ENCODE measurements at regions of chr2 and their contacts with region 1.

Region 1: DNA sequence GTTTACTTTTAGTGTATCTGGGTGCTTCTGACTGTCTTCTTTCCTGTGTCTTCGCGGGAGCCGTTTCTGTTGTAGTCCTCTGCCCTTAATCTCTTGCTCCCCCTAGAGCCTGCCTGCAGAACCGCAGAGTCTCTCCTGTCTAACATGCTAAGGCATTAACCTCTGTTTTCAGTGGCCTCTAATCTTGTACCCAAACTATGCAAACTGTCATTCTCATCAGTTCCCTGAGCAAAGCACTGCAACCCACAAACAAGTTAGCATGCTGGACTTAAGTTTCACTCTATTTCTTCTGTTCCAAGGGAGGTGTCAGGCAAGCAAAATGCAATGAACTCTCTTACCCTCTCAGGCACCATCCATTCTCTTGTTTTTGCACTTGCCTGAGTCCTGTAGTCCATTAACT is 138.4 kb downstream of the OTX1 start:
- DNase-seq: peak; percentile 64 to 73
- H3K4me3 ChIP-seq: no peak overlapping the region
- H3K4me3 Mint-ChIP-seq: peak overlapping the region; percentile 25
- H3K27ac Mint-ChIP-seq: no peak overlapping the region
- H3K4me1 ChIP-seq: peaks cover 26% of the 10 kb centered on the region
- H3K4me1 Mint-ChIP-seq: peaks cover 21% of the 10 kb centered on the region
- H3K27me3 ChIP-seq: no peaks in the 10 kb centered on the region
- H3K27me3 Mint-ChIP-seq: no peaks in the 10 kb centered on the region
- CTCF ChIP-seq: peak; percentile 74 to 80

Region 2: GRCh38 chr2:62456721-62457539 is 732.1 kb before region 1 on chr2:
- CTCF ChIA-PET with region 1: no interaction called
- POLR2A ChIA-PET with region 1: no interaction called
- intact Hi-C with region 1: loop called (anchors 2 kb)
- DNase-seq: peak; percentile 82 to 95
- H3K4me3 ChIP-seq: peak overlapping the region; percentile 68
- H3K4me3 Mint-ChIP-seq: peak overlapping the region; percentile 75
- H3K27ac Mint-ChIP-seq: peak overlapping the region; percentile 66
- H3K4me1 ChIP-seq: peaks cover 38% of the 10 kb centered on the region
- H3K4me1 Mint-ChIP-seq: peaks cover 8% of the 10 kb centered on the region
- H3K27me3 ChIP-seq: no peaks in the 10 kb centered on the region
- H3K27me3 Mint-ChIP-seq: no peaks in the 10 kb centered on the region
- CTCF ChIP-seq: peak; percentile 92 to 98

Region 3: GRCh38 chr2:62787386-62787785 is 401.6 kb before region 1 on chr2:
- CTCF ChIA-PET with region 1: no interaction called
- POLR2A ChIA-PET with region 1: no interaction called
- intact Hi-C with region 1: loop called (anchors 1 kb)
- DNase-seq: peak in 1 of 2 experiments; percentile 27
- H3K4me3 ChIP-seq: no peak overlapping the region
- H3K4me3 Mint-ChIP-seq: no peak overlapping the region
- H3K27ac Mint-ChIP-seq: no peak overlapping the region
- H3K4me1 ChIP-seq: no peaks in the 10 kb centered on the region; the same call in 1 of the 2 replicates
- H3K4me1 Mint-ChIP-seq: peaks cover 20% of the 10 kb centered on the region
- H3K27me3 ChIP-seq: no peaks in the 10 kb centered on the region
- H3K27me3 Mint-ChIP-seq: no peaks in the 10 kb centered on the region
- CTCF ChIP-seq: peak in 1 of 2 experiments; percentile 14

Region 4: DNA sequence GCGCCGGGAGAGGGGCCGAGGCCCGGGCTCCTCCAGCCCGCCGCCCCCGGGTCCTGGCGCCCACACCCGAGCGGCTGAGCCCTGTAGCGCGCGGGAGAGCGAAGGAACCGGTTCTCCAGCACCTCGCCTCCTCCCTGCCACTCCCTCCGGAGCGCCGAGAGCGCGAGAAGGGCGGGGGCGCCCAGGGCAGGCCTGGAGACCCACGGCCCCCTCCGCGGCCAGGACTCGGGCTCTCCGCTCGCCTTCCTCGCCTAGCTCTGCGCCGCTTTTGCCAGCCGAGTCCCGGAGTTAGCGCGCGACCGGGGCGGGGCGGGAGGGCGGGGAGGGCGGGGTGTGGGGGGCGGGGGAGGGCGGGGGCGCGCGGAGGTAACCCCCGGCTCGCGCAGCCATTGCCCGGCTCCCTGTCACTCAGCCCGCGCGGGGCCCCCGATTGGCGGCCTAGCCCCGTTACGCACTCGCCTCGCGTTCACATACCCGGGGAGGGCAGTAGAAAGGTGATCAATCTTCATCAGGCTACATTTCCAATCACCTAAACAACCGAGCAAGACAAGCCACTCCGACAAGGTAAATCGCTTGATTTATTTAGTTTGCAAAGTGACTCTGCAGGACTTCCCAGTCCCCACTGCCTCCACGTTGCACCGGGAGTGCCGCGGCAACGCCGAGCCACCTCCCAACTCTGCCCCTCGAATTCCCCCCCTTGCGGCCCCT is 138.5 kb before region 1 on chr2 and contains the start of gene OTX1:
- CTCF ChIA-PET with region 1: no interaction called
- POLR2A ChIA-PET with region 1: no interaction called
- intact Hi-C with region 1: loop called (anchors 2 kb)
- DNase-seq: peak; percentile 95
- H3K4me3 ChIP-seq: peak within 1 kb of the TSS; percentile 52
- H3K4me3 Mint-ChIP-seq: peak within 1 kb of the TSS; percentile 85
- H3K27ac Mint-ChIP-seq: peak within 1 kb of the TSS; percentile 89
- H3K4me1 ChIP-seq: no peaks in the 10 kb centered on the region
- H3K4me1 Mint-ChIP-seq: no peaks in the 10 kb centered on the region
- H3K27me3 ChIP-seq: no peaks in the 10 kb centered on the region
- H3K27me3 Mint-ChIP-seq: no peaks in the 10 kb centered on the region
- CTCF ChIP-seq: peak in 1 of 2 experiments; percentile 18
- total RNA-seq, gene OTX1: 14.4 and 16.0 TPM in 2 replicates

Region 5: DNA sequence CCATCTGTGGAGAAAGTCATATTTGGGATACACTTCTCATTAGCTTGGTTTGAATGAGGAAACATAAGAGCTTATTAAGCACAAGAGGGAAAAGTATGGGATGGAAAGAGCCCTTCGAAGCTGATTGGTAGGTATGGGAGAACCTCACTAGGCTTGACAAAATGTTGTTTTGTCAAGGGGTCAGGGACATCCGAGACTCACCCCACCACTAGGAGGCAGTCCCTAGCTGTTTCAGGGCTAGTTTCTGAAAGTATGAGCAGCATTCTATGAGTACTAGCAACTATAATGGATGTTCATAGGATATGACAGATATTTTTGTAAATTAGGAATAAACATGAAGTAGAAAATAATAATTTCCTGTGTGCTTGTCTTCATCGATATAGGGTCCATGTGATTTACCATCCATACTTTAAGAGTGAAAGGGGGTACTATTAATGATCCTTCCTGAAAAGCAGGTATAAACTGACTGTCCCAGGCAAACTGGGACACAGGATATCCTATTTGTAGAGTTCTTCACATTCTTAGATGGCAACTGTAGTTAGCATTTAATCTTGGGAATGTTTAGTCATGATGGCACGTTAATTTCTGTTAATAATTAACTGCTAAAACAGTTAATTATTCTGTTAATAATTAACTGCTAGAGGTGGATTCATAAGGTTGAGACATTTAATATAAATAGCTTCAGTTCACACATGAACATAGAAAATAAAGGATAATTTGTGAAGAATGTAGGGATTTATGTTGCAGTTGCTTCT is 110.0 kb before region 1 on chr2:
- CTCF ChIA-PET with region 1: no interaction called
- POLR2A ChIA-PET with region 1: no interaction called
- intact Hi-C with region 1: loop called (anchors 1 kb)
- DNase-seq: peak; percentile 47 to 63
- H3K4me3 ChIP-seq: no peak overlapping the region
- H3K4me3 Mint-ChIP-seq: no peak overlapping the region
- H3K27ac Mint-ChIP-seq: no peak overlapping the region
- H3K4me1 ChIP-seq: peaks cover 26% of the 10 kb centered on the region
- H3K4me1 Mint-ChIP-seq: peaks cover 12% of the 10 kb centered on the region
- H3K27me3 ChIP-seq: no peaks in the 10 kb centered on the region
- H3K27me3 Mint-ChIP-seq: no peaks in the 10 kb centered on the region
- CTCF ChIP-seq: peak; percentile 47

Region 6: GRCh38 chr2:63166917-63167316 is 22.1 kb before region 1 on chr2:
- CTCF ChIA-PET with region 1: no interaction called
- POLR2A ChIA-PET with region 1: no interaction called
- intact Hi-C with region 1: no loop called
- DNase-seq: no peak
- H3K4me3 ChIP-seq: no peak overlapping the region
- H3K4me3 Mint-ChIP-seq: no peak overlapping the region
- H3K27ac Mint-ChIP-seq: no peak overlapping the region
- H3K4me1 ChIP-seq: no peaks in the 10 kb centered on the region
- H3K4me1 Mint-ChIP-seq: no peaks in the 10 kb centered on the region
- H3K27me3 ChIP-seq: no peaks in the 10 kb centered on the region
- H3K27me3 Mint-ChIP-seq: no peaks in the 10 kb centered on the region
- CTCF ChIP-seq: no peak

Region 7: GRCh38 chr2:63287956-63288355 is 98.9 kb after region 1 on chr2:
- CTCF ChIA-PET with region 1: no interaction called
- POLR2A ChIA-PET with region 1: no interaction called
- intact Hi-C with region 1: no loop called
- DNase-seq: no peak
- H3K4me3 ChIP-seq: no peak overlapping the region
- H3K4me3 Mint-ChIP-seq: no peak overlapping the region
- H3K27ac Mint-ChIP-seq: no peak overlapping the region
- H3K4me1 ChIP-seq: no peaks in the 10 kb centered on the region
- H3K4me1 Mint-ChIP-seq: no peaks in the 10 kb centered on the region
- H3K27me3 ChIP-seq: no peaks in the 10 kb centered on the region; the same call in 1 of the 2 replicates
- H3K27me3 Mint-ChIP-seq: no peaks in the 10 kb centered on the region
- CTCF ChIP-seq: no peak

Region 8: DNA sequence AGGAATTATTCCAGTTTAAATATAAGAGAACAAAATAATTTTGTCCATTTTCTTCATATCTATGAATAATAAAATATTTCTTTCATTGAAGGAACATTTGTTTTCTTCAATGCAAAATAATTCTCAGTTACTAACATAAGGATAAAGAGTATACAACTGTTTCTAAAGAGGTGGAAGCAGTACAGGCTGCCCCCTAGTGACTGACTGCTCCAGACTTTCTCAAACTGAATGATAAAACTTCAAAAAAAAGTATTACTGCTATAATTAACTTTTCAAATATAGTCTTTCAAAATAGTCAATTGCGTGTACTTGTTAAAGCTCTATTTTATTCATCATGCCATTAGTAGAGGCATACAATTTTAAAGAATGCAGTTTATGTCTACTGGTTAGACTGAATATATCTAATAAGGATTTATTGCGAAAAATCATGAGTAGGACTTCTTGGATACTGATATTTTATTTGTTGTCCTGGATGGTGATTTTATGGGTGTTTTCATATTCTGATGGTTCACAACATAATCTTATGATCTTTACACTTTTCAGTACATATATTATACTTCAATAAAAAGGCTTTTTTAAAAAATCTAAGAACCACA is 299.2 kb after region 1 on chr2:
- CTCF ChIA-PET with region 1: no interaction called
- POLR2A ChIA-PET with region 1: no interaction called
- intact Hi-C with region 1: loop called (anchors 2 kb)
- DNase-seq: peak in 1 of 2 experiments; percentile 41
- H3K4me3 ChIP-seq: no peak overlapping the region
- H3K4me3 Mint-ChIP-seq: no peak overlapping the region
- H3K27ac Mint-ChIP-seq: no peak overlapping the region
- H3K4me1 ChIP-seq: no peaks in the 10 kb centered on the region
- H3K4me1 Mint-ChIP-seq: no peaks in the 10 kb centered on the region
- H3K27me3 ChIP-seq: no peaks in the 10 kb centered on the region
- H3K27me3 Mint-ChIP-seq: no peaks in the 10 kb centered on the region
- CTCF ChIP-seq: peak; percentile 78 to 80